ENCODE measurements at regions of chr1 and their contacts with region 1.

Region 1: GRCh38 chr1:85307987-85308832 is 31.8 kb upstream of the BCL10 start:
- H3K4me3 Mint-ChIP-seq: no peak overlapping the region
- H3K27ac Mint-ChIP-seq: no peak overlapping the region
- H3K4me1 Mint-ChIP-seq: peaks cover 5% of the 10 kb centered on the region
- H3K27me3 Mint-ChIP-seq: peaks cover 38% of the 10 kb centered on the region

Region 2: DNA sequence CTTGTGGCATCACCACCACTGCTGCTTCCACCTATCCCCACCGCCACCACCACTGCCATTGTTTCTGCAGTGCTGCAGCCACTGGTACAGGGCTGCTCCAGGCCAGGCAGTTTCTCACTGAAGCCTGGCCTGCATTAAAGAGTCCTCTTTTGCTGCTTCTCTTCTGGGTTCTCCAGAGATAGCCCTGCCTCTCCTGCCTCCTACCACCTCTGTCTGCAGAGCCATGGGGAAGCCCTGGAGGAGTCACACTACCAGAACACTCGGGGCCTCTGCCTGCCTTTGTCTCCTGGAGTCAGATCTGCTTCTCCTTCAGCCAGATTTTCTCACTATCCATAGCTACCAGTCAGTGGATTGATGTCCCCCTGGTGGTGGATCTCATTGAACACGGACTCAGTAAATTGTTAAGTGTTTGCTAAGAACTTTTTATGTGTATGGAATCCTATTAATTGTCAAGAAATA is 194.4 kb after region 1 on chr1:
- intact Hi-C with region 1: loop called (anchors 5 kb)
- H3K4me3 Mint-ChIP-seq: no peak overlapping the region
- H3K27ac Mint-ChIP-seq: no peak overlapping the region
- H3K4me1 Mint-ChIP-seq: no peaks in the 10 kb centered on the region
- H3K27me3 Mint-ChIP-seq: peaks cover 4% of the 10 kb centered on the region